Activated CD8-positive, alpha-beta memory T cell treated with anti-CD3 and anti-CD28 coated beads, Interleukin-2, amount 10 ng/mL, durations not matched to agents 7 days and 5 days (primary cell): ENCODE measurements at regions of chr6 and their contacts with region 1.

Region 1: DNA sequence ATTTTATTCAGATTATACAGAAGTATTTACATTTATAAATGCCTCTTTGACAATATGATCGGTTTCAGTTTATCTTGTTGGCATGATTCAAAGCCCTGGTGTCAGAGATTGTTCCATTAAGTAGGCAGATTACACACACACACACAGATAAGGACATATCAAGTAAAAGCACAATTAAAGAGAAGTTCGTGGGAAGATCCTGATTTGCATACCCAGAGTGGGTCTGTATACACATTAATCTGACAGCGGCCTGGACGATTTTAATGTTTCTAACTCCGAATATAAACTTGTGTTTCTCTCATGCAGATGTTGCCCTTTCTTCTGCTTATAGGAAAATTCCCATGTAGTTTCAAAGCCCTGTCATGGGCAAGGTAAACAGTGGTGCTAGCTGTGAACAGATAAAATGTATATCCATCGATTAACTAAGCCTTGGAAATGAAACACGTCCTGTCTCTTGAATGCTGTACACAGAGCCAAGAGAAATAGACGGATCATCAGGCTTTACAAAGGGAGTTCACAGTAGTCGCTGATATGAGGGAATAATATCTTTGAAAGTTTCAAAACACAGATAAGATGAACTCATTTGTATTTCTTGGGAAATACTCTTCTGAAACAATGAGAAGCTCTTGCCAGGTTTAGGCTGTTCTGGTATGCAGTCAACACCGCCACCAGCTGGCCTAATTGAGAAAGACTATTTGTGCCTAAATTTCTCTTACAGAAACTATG is 108.2 kb upstream of the GMDS start:
- DNase-seq: peak; percentile 70
- ATAC-seq: no peak
- H3K4me3 Mint-ChIP-seq: no peak overlapping the region
- H3K27ac Mint-ChIP-seq: no peak overlapping the region
- H3K4me1 Mint-ChIP-seq: no peaks in the 10 kb centered on the region
- H3K27me3 Mint-ChIP-seq: no peaks in the 10 kb centered on the region

Region 2: GRCh38 chr6:1596088-1596852 is 757.3 kb before region 1 on chr6:
- CTCF ChIA-PET with region 1: interaction called, 11 read pairs
- DNase-seq: peak; percentile 67
- ATAC-seq: peak; percentile 75
- H3K4me3 Mint-ChIP-seq: no peak overlapping the region
- H3K27ac Mint-ChIP-seq: no peak overlapping the region
- H3K4me1 Mint-ChIP-seq: peaks cover 3% of the 10 kb centered on the region
- H3K27me3 Mint-ChIP-seq: peaks cover 64% of the 10 kb centered on the region

Region 3: DNA sequence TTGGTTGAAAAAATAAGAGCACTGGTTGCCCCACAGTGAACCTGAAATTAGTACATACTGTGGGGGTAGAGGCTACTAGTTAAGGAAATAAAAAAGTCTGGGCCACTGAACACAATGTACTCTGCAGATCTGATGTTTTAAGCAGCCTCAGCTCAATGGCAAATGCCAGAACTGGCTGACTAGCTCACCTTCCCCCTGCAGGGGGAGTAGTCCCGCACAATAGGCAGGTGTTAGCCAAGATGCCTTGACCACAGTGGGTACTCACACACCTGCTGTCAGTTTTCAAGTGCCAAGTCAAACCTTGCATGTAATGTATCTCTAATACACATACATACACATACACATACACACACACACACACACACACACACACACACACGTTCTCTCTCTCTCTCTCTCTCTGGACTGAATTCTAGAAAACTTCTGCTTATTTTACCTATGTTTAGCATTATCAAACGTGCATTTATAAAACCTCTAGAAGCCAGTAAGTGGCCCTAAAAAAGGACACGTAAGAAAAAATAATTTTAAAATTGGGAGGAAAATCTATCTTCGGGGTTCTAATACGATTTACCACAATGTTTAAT is 144.3 kb before region 1 on chr6:
- CTCF ChIA-PET with region 1: interaction called, 45 read pairs
- DNase-seq: peak; percentile 59
- ATAC-seq: peak; percentile 55
- H3K4me3 Mint-ChIP-seq: no peak overlapping the region
- H3K27ac Mint-ChIP-seq: no peak overlapping the region
- H3K4me1 Mint-ChIP-seq: no peaks in the 10 kb centered on the region
- H3K27me3 Mint-ChIP-seq: peaks cover 7% of the 10 kb centered on the region

Region 4: DNA sequence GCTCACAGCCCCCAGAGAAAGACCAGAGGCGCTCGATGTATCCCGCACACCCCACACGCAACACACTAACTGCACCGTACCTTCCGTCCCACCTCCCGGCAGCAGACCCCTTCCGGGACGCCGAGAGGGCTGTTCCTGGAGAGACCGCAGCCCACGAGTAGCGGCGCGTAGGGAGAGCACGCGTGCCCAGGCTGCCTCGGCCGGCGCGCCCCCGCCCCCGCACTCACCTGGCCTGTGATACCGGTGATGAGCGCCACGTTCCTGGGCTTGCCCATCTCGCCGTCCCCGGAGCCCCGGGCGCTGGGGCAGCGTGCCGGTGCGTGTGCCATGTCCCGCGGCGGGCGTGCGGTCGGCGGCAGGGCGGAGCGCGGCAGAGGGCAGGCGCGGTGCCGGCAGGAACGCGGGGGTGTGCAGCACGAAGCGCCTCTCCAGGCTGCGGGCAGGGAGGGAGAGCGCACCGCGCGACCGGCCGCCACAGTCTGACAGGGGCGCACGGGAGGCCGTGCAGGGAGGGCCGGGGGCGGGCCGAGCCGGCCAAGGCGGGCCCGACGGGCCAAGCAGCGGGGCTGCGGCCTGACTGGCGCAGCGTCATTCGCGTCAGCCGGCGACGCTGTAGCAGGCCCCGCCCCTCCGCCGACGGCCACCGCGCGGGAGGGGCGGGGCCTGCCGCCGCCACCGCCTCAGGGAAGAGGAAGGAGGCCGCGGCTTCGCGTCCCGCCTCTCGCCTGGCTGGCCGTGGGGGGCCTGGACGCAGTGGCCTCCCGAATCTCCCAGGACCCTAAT is 108.3 kb before region 1 on chr6 and contains the start of gene GMDS:
- CTCF ChIA-PET with region 1: interaction called, 11 read pairs
- DNase-seq: peak; percentile 87
- ATAC-seq: peak; percentile 97
- H3K4me3 Mint-ChIP-seq: peak within 1 kb of the TSS; percentile 87
- H3K27ac Mint-ChIP-seq: peak within 1 kb of the TSS; percentile 96
- H3K4me1 Mint-ChIP-seq: peaks cover 40% of the 10 kb centered on the region
- H3K27me3 Mint-ChIP-seq: no peaks in the 10 kb centered on the region
- total RNA-seq, gene GMDS: 28.2 to 36.9 TPM

Region 5: DNA sequence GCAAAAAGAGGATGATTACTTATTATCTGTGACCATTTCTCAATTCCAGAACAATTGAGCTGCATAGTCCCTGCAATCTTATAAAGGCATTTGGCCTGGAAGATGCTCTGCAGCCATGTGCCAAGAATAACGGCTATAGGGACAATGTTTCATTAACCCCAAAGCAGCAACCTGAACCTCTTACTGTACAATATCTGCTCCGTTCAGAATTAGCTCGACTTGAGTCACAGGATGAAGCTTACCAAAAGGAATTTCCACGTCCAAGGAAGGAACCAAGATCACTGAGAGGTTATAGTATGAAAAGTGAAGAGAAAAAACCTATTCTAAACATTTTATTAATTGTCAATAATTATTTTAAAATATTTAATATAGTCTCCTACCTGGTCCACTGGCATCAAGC is 59.2 kb after region 1 on chr6:
- CTCF ChIA-PET with region 1: no interaction called
- DNase-seq: no peak
- ATAC-seq: no peak
- H3K4me3 Mint-ChIP-seq: no peak overlapping the region
- H3K27ac Mint-ChIP-seq: no peak overlapping the region
- H3K4me1 Mint-ChIP-seq: no peaks in the 10 kb centered on the region
- H3K27me3 Mint-ChIP-seq: no peaks in the 10 kb centered on the region

Region 6: DNA sequence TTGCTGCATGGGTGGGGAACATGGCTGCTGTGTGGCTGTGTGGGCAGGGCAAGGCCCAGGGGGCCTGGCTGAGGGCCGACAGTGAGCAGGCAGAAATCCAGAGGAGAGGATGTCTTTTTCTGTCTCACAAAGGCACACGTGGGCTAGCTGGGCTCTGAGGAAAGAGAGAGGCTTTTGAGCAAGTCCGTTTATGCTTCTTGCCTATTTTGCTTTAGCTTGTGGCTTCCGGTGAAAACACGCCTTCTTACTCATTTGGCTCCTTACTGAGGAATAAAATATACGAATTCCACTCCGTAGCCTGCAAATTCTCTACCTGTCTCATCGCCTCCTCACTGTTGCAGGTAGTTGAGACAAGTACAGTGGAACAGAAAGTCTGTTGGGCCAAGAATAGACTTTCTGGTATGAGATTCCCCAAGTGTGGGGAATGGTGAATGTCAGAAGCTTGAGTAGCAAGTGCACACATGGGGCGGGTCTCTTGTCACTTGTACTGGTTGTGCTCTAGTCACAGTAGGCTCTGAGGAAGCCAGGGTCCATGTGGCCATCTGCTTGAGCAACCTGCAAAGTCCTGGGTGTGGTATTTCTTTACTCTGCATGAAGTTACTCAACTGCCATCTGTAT is 440.1 kb after region 1 on chr6:
- CTCF ChIA-PET with region 1: no interaction called
- DNase-seq: peak; percentile 66
- ATAC-seq: peak; percentile 71
- H3K4me3 Mint-ChIP-seq: peak overlapping the region; percentile 20
- H3K27ac Mint-ChIP-seq: peak overlapping the region; percentile 85
- H3K4me1 Mint-ChIP-seq: peaks cover 45% of the 10 kb centered on the region
- H3K27me3 Mint-ChIP-seq: no peaks in the 10 kb centered on the region